ENCODE measurements at regions of chr1 and their contacts with region 1.

Region 1: DNA sequence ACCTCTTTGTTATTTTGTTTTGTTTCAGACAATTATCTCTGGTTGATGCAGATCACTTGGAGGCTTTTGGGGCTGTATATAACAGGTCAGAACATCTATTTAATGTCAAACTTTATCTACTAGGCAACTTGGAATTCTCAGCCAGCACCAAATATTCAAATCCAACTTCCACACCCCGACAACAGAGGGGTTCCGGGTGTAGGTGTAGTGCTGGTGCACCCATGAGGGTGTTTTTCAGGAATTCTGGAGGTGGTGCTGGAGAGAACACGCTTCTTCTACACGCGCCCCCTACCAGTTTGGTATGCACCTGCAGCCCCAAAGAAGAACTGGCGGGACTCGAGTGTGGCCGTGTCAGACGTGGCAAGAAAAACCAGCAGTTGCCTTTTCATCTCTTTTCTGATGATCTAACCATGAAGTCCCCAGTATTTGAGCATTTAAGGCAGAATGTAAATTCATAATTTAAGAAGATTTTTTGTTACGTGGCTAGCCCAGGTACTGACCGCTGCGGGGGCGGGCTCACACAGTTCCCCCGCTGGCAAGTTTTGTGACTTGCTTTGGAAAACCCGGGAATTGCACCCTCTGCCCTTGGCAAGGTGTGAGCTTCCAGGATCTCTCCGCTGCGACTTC is 462 bp upstream of the TLCD4 start:
- DNase-seq: peak; percentile 75
- H3K4me3 ChIP-seq: peak overlapping the region; percentile 68 to 91 (median 88)
- H3K27ac ChIP-seq: peak overlapping the region; percentile 73 to 82 (median 80)
- H3K4me1 ChIP-seq: peaks cover 0 to 22% (median 13%) of the 10 kb centered on the region in 4 donors
- H3K27me3 ChIP-seq: no peaks in the 10 kb centered on the region
- CTCF ChIP-seq: peak; percentile 55 to 71 (median 62)
- EP300 ChIP-seq: no peak
- POLR2A ChIP-seq: no peak

Region 2: DNA sequence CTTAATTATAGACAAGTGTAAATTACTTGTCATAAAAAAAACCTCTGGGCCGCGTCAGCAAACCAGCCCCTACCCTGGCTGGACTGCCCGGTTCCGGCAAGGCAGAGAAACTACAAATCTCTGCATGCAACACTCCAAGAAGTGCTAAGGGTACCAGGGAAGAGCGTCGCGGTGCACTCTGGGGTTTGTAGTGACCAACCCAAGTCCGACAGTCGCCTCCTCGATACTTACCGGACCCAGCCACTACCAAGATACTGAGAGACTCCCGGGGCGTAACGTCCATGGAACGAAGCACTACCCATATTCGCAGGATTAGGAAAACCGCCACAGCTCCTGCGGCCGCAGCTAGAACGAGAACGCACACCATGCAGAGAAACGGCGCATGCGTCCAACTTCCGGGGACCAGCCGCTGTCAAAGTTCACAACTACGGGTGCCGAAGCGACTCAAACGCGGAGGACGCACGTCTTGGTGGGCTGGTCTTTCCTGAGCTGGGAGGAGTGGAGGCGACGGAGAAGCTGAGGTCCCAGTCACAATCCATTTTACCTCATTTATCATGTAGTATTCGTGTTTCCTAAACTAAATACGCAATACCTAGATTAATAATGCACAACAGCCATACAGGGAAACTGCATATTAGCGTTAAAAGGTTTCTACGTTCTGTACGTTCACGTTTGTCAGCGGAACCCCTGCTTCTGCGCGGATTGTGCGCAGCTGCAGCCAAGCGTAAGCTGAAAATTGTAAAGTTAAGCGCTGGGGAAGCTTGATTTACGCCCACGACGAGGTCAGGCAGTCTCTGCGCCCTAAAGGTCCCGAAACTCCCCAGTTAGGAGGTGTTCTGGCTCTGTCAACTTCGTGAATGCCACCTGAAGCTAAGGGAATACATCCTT is 43.9 kb before region 1 on chr1 and contains the start of gene ALG14:
- intact Hi-C with region 1: loop called (anchors 2 kb)
- DNase-seq: peak; percentile 97
- H3K4me3 ChIP-seq: peak within 1 kb of the TSS; percentile 59 to 76 (median 73)
- H3K27ac ChIP-seq: peak within 1 kb of the TSS; percentile 86 to 93 (median 92)
- H3K4me1 ChIP-seq: peaks cover 0 to 14% (median 10%) of the 10 kb centered on the region in 4 donors
- H3K27me3 ChIP-seq: no peaks in the 10 kb centered on the region
- CTCF ChIP-seq: no peak
- EP300 ChIP-seq: no peak
- POLR2A ChIP-seq: peak; percentile 85 to 93
- total RNA-seq, gene ALG14: 0.55 to 1.8 (median 1.1) TPM

Region 3: GRCh38 chr1:95084317-95085176 is 32.1 kb before region 1 on chr1:
- intact Hi-C with region 1: loop called (anchors 2 kb)
- DNase-seq: no peak
- H3K4me3 ChIP-seq: no peak overlapping the region
- H3K27ac ChIP-seq: no peak overlapping the region
- H3K4me1 ChIP-seq: peaks cover 0 to 12% (median 9%) of the 10 kb centered on the region in 4 donors
- H3K27me3 ChIP-seq: no peaks in the 10 kb centered on the region
- CTCF ChIP-seq: peak; percentile 14 to 57 (median 50)
- EP300 ChIP-seq: no peak
- POLR2A ChIP-seq: no peak

Region 4: DNA sequence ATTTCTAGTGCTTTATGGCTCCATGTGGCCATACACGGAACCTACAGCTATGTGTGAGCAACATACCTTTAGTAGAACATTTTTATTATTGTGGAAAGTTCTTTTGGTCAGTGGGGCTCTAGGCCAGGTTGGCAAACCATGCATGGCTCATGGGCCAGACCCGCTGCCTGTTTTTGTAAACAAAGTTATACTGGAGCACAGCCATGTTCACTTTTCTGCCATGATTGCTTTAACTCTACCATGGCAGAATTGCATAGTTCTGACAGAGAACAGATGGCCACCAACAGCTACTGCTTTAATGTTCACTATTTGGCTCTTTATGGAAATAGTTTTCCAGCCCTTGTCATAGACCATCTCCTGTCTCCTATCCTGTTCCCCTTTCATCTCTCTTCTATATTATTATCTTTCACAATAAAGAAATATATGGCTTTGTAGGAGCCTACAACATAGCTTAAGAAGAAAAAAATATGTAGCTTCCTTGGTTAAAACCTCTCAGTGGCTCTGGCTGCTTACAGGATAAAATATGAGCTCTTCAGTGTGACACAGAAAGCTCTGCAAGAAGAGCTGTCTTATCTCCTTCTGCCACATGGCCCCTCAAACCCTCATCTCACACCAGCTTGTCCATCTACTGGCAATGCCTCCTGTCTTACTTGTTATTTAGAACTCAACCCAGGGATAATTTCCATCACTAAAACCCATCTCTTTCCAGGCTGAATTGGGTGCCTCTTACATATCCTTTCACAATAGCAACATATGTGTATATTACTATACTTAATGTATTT is 62.7 kb after region 1 on chr1:
- intact Hi-C with region 1: loop called (anchors 5 kb)
- DNase-seq: no peak
- H3K4me3 ChIP-seq: no peak overlapping the region
- H3K27ac ChIP-seq: peak overlapping the region in 2 of 4 donors; percentile 30 to 58
- H3K4me1 ChIP-seq: peaks cover 0 to 39% (median 27%) of the 10 kb centered on the region in 4 donors
- H3K27me3 ChIP-seq: no peaks in the 10 kb centered on the region
- CTCF ChIP-seq: no peak
- EP300 ChIP-seq: no peak
- POLR2A ChIP-seq: no peak

Region 5: DNA sequence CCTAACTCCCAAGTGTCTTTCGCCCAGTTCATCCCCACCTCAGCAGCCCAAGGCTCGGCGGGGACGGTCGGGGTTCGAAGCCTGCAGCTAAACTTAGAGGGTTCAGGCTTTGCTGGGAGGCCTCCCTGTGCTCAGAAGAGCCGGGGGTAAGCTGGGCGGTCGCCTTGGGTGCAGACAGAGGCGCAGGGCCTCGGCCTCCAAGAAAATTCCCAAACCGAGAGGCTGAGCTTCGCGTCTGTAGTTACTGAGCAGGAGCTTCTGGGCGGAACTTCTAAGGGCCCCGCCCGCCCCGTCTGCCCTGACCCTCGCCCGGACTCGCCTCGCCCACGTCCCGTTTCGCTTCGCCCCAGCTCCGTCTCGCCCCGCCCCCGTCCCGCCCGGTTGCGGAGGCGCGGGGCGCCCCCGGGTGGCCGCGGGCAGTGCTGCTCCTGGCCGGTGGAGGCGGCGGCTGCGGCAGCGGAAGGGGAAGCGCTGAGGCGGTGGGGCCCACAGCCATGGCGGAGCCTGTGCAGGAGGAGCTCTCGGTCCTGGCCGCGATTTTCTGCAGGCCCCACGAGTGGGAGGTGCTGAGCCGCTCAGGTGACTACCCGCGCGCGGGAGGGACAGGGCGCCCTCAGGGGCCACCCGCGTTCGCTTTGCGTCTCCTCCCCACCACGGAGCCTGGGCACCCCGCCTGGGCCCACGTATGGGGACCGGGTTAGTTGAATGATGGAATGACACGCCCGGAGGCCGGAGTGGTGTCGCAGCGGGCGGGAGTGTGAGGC is 117.2 kb after region 1 on chr1 and contains the start of gene RWDD3:
- intact Hi-C with region 1: loop called (anchors 1 kb)
- DNase-seq: peak; percentile 97
- H3K4me3 ChIP-seq: peak within 1 kb of the TSS; percentile 68 to 86 (median 80)
- H3K27ac ChIP-seq: peak within 1 kb of the TSS; percentile 79 to 91 (median 86)
- H3K4me1 ChIP-seq: peaks cover 0 to 50% (median 37%) of the 10 kb centered on the region in 4 donors
- H3K27me3 ChIP-seq: no peaks in the 10 kb centered on the region
- CTCF ChIP-seq: peak; percentile 39 to 94 (median 45)
- EP300 ChIP-seq: no peak
- POLR2A ChIP-seq: peak in 1 of 2 donors; percentile 20
- total RNA-seq, gene RWDD3: 11.1 to 22.2 (median 16.7) TPM

Region 6: GRCh38 chr1:95668165-95668564 is 551.5 kb after region 1 on chr1:
- intact Hi-C with region 1: no loop called
- DNase-seq: no peak
- H3K4me3 ChIP-seq: no peak overlapping the region
- H3K27ac ChIP-seq: no peak overlapping the region
- H3K4me1 ChIP-seq: no peaks in the 10 kb centered on the region
- H3K27me3 ChIP-seq: no peaks in the 10 kb centered on the region
- CTCF ChIP-seq: no peak
- EP300 ChIP-seq: no peak
- POLR2A ChIP-seq: no peak

Measured in sigmoid colon (tissue), 7 donors.